ENCODE measurements at regions of chr12 and their contacts with region 1.

Region 1: GRCh38 chr12:118346895-118347294 is 25.8 kb downstream of the TAOK3 start:
- DNase-seq: peak; percentile 68
- ATAC-seq: peak; percentile 80
- H3K4me3 ChIP-seq: no peak overlapping the region
- H3K4me3 Mint-ChIP-seq: peak overlapping the region; percentile 59
- H3K27ac ChIP-seq: peak overlapping the region; percentile 28 to 76
- H3K27ac Mint-ChIP-seq: peak overlapping the region; percentile 73
- H3K4me1 ChIP-seq: peaks cover 21 to 32% of the 10 kb centered on the region in 2 donors
- H3K4me1 Mint-ChIP-seq: peaks cover 51% of the 10 kb centered on the region
- H3K27me3 ChIP-seq: no peaks in the 10 kb centered on the region
- H3K27me3 Mint-ChIP-seq: no peaks in the 10 kb centered on the region
- CTCF ChIP-seq: no peak

Region 2: DNA sequence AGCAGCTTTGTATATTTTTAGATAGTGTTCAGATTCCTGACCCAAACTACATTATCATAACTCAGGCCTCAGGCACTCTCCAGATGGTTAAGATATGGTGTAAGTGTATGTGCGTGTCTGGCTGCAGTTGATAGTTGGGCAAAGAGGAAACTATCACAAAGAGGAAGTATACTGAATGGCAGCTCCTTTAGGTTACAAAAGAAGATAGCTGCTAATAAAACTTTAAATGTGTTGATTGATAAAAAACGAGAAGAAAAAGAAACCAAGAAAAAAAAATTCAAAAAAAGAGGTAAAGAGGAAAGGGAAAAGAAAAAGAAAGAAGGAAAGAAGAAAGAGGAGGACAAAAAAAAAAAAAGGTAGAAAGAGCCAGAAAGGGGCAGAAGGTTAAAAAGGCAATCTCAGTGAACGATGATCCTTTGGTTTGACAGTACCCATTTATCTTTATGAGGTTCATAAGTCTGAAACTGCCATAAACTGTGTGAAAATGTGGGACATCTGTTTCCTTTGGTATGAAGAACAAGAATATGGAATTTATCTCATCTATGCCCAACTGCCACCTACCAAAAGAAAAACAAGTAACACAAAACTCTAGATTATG is 16.4 kb before region 1 on chr12:
- CTCF ChIA-PET with region 1: interaction called, 4 read pairs
- POLR2A ChIA-PET with region 1: no interaction called
- intact Hi-C with region 1: loop called (anchors 2 kb)
- DNase-seq: peak; percentile 70
- ATAC-seq: peak; percentile 91
- H3K4me3 ChIP-seq: peak overlapping the region in 1 of 5 experiments; percentile 33
- H3K4me3 Mint-ChIP-seq: peak overlapping the region; percentile 42
- H3K27ac ChIP-seq: peak overlapping the region; percentile 7 to 83
- H3K27ac Mint-ChIP-seq: peak overlapping the region; percentile 80
- H3K4me1 ChIP-seq: peaks cover 21 to 41% of the 10 kb centered on the region in 2 donors
- H3K4me1 Mint-ChIP-seq: peaks cover 54% of the 10 kb centered on the region
- H3K27me3 ChIP-seq: no peaks in the 10 kb centered on the region
- H3K27me3 Mint-ChIP-seq: no peaks in the 10 kb centered on the region
- CTCF ChIP-seq: no peak

Measured in B cell (primary cell).